ENCODE measurements at regions of chr2 and their contacts with region 1.

Region 1: GRCh38 chr2:190718652-190719526 is 70.0 kb downstream of the NAB1 start:
- DNase-seq: peak; percentile 91
- H3K4me3 Mint-ChIP-seq: peak overlapping the region; percentile 62
- H3K27ac Mint-ChIP-seq: peak overlapping the region; percentile 97
- H3K4me1 Mint-ChIP-seq: peaks cover 84% of the 10 kb centered on the region
- H3K27me3 Mint-ChIP-seq: no peaks in the 10 kb centered on the region

Region 2: GRCh38 chr2:190319555-190320498 is 399.1 kb before region 1 on chr2 and contains the start of gene HIBCH:
- CTCF ChIA-PET with region 1: no interaction called
- POLR2A ChIA-PET with region 1: no interaction called
- intact Hi-C with region 1: loop called (anchors 2 kb)
- DNase-seq: peak; percentile 96
- H3K4me3 Mint-ChIP-seq: peak within 1 kb of the TSS; percentile 87
- H3K27ac Mint-ChIP-seq: peak within 1 kb of the TSS; percentile 94
- H3K4me1 Mint-ChIP-seq: peaks cover 52% of the 10 kb centered on the region
- H3K27me3 Mint-ChIP-seq: no peaks in the 10 kb centered on the region
- total RNA-seq, gene HIBCH: 33.9 to 37.8 TPM

Region 3: GRCh38 chr2:190679813-190680591 is 38.9 kb before region 1 on chr2:
- CTCF ChIA-PET with region 1: interaction called, 18 read pairs
- POLR2A ChIA-PET with region 1: interaction called, 45 read pairs
- intact Hi-C with region 1: loop called (anchors 1 kb)
- DNase-seq: peak; percentile 80
- H3K4me3 Mint-ChIP-seq: peak overlapping the region; percentile 61
- H3K27ac Mint-ChIP-seq: peak overlapping the region; percentile 98
- H3K4me1 Mint-ChIP-seq: peaks cover 66% of the 10 kb centered on the region
- H3K27me3 Mint-ChIP-seq: no peaks in the 10 kb centered on the region

Region 4: GRCh38 chr2:190759749-190760213 is 40.9 kb after region 1 on chr2:
- CTCF ChIA-PET with region 1: no interaction called
- POLR2A ChIA-PET with region 1: interaction called, 3 read pairs
- intact Hi-C with region 1: loop called (anchors 1 kb)
- DNase-seq: no peak
- H3K4me3 Mint-ChIP-seq: peak overlapping the region; percentile 51
- H3K27ac Mint-ChIP-seq: peak overlapping the region; percentile 18
- H3K4me1 Mint-ChIP-seq: peaks cover 32% of the 10 kb centered on the region
- H3K27me3 Mint-ChIP-seq: no peaks in the 10 kb centered on the region

Region 5: DNA sequence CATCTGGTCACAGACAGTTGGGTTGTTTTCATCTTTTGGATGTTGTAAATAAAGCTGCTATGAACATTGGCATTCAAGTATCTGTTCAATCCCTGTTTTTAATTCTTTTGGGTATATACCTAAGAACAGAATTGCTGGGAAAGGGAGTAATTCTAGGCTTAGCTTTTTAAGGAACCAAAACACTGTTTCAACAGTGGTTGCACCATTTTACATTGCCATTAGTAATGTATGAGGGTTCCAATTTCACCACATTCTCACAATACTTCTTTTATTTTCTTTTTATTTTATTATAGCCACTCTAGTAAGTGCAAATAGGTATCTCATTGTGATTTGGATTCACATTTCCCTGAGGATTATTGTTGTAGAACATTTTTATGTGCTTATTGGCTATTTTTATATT is 52.8 kb after region 1 on chr2:
- CTCF ChIA-PET with region 1: no interaction called
- POLR2A ChIA-PET with region 1: no interaction called
- intact Hi-C with region 1: no loop called
- DNase-seq: no peak
- H3K4me3 Mint-ChIP-seq: no peak overlapping the region
- H3K27ac Mint-ChIP-seq: no peak overlapping the region
- H3K4me1 Mint-ChIP-seq: peaks cover 12% of the 10 kb centered on the region
- H3K27me3 Mint-ChIP-seq: peaks cover 3% of the 10 kb centered on the region

Region 6: GRCh38 chr2:191020221-191020741 is 301.4 kb after region 1 on chr2:
- CTCF ChIA-PET with region 1: no interaction called
- POLR2A ChIA-PET with region 1: no interaction called
- intact Hi-C with region 1: loop called (anchors 5 kb)
- DNase-seq: peak; percentile 97
- H3K4me3 Mint-ChIP-seq: no peak overlapping the region
- H3K27ac Mint-ChIP-seq: no peak overlapping the region
- H3K4me1 Mint-ChIP-seq: peaks cover 34% of the 10 kb centered on the region
- H3K27me3 Mint-ChIP-seq: peaks cover 2% of the 10 kb centered on the region

Region 7: GRCh38 chr2:191478799-191479679 is 760.1 kb after region 1 on chr2:
- CTCF ChIA-PET with region 1: no interaction called
- POLR2A ChIA-PET with region 1: no interaction called
- intact Hi-C with region 1: no loop called
- DNase-seq: no peak
- H3K4me3 Mint-ChIP-seq: no peak overlapping the region
- H3K27ac Mint-ChIP-seq: no peak overlapping the region
- H3K4me1 Mint-ChIP-seq: no peaks in the 10 kb centered on the region
- H3K27me3 Mint-ChIP-seq: peaks cover 4% of the 10 kb centered on the region

Region 8: DNA sequence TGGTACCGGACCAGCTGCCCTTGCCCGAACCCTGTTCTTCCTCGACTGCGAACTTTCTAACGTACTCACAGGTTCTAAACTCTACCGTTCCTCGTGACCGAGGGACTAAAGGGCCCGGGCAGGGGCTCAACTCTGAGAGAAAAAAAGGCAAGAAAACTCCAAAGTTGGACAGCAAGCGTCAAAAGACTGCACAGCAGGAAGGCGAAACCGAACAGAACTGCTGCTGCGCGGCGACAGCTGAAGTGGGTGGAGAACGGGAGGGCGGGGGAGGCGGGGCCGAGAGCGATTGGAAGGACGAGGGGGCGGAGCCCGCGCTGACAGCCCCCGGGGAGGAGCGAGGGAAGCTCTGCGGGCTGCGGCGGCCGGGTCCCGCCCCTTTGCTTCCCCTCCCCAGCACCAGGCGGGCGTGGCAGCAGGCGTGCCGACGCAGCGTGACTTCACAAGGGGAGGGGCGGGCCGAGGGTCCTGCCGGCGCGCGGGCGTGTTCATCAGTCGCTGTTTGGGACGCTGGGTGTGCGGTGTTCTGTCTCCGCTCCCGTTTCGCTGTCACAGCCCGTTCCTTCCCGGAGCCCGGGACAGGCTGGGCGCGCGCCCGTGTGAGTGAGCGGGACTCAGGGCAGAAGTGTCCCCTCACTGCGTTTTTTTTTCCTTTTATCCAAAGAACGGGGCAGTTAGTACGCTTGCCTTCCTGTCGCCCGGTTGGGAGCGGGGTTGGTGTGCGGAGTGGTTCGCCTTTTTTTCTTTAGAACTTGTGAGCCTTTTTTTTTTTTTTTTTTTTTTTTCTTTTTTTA is 959.0 kb after region 1 on chr2 and contains the start of gene NABP1:
- CTCF ChIA-PET with region 1: no interaction called
- POLR2A ChIA-PET with region 1: no interaction called
- intact Hi-C with region 1: loop called (anchors 2 kb)
- DNase-seq: peak; percentile 99
- H3K4me3 Mint-ChIP-seq: peak within 1 kb of the TSS; percentile 96
- H3K27ac Mint-ChIP-seq: peak within 1 kb of the TSS; percentile 99
- H3K4me1 Mint-ChIP-seq: peaks cover 46% of the 10 kb centered on the region
- H3K27me3 Mint-ChIP-seq: peaks cover 2% of the 10 kb centered on the region
- total RNA-seq, gene NABP1: 65.1 to 65.4 TPM